Activated naive CD4-positive, alpha-beta T cell treated with anti-CD3 and anti-CD28 coated beads, Interleukin-2, amount 10 ng/mL, durations not matched to agents 7 days and 5 days (primary cell): ENCODE measurements at regions of chr16 and their contacts with region 1.

Region 1: DNA sequence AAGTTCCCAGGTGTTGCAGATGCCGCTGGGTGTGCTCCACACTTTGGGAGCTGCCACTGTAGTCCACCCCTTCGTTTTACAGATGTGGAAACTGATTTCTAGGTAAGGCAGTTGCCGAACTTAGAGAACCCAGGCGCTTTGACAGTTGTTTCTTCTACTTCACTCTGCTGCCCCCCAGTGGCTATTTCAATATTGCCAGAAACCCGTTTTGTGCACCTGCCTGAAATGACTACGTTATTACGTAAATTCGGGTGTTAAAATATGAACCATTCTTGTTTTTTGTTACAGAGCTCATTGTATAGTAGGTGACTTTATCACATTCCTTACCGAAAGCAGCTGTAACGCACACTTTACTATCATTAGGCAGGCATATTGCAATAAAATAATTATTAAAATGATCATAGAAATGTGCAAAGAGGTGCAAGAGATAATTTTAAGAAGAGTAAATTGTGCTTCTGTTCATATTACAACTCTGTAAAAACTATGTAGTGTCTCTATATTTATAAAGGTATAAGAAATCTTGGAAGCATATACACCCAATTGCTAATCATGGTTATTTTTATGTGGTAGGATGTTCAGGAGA is 44.9 kb downstream of the OTOA start:
- DNase-seq: peak; percentile 89
- H3K4me3 Mint-ChIP-seq: no peak overlapping the region
- H3K27ac Mint-ChIP-seq: no peak overlapping the region
- H3K4me1 Mint-ChIP-seq: peaks cover 5% of the 10 kb centered on the region
- H3K27me3 Mint-ChIP-seq: peaks cover 24% of the 10 kb centered on the region

Region 2: DNA sequence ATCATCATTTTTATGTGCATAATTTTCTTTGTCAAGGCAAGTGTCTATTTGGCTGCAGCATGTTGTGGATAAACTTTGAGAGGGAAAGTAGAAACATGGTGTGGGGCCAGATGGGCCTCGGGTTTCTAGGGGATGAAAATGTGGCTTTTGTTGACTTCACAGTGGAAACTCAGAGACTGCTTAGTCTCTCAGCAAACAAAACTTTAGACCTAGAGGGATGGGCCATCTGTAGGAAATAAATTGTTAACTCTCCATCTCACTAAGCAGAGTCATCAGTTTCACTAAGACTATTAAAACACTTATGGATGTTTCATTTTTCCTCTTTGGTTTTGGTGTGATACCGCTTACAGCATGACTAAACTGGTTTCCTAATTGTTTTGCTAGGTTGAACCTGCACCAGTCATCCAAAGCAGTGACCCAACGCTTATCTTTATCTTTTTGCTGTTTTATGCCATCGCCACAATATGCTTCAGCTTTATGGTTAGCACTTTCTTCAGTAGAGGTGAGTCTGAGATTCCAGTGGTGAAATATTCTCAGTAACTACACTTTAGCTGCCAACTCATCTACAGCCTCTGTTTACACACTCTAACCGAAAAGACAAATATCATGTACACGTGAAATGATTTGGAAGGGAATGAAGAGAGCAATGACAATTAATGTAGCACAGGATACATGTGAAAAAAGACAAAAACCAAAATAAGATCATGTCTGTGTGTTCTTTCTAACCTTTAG is 369.9 kb before region 1 on chr16:
- CTCF ChIA-PET with region 1: no interaction called
- DNase-seq: no peak
- H3K4me3 Mint-ChIP-seq: no peak overlapping the region
- H3K27ac Mint-ChIP-seq: no peak overlapping the region
- H3K4me1 Mint-ChIP-seq: no peaks in the 10 kb centered on the region
- H3K27me3 Mint-ChIP-seq: peaks cover 11% of the 10 kb centered on the region

Region 3: GRCh38 chr16:21646721-21647561 is 61.7 kb before region 1 on chr16:
- CTCF ChIA-PET with region 1: interaction called, 10 read pairs
- DNase-seq: peak; percentile 88
- H3K4me3 Mint-ChIP-seq: peak overlapping the region; percentile 73
- H3K27ac Mint-ChIP-seq: peak overlapping the region; percentile 95
- H3K4me1 Mint-ChIP-seq: peaks cover 60% of the 10 kb centered on the region
- H3K27me3 Mint-ChIP-seq: no peaks in the 10 kb centered on the region

Region 4: GRCh38 chr16:22161999-22162655 is 453.5 kb after region 1 on chr16 and contains the start of gene SDR42E2:
- CTCF ChIA-PET with region 1: no interaction called
- DNase-seq: peak; percentile 56
- H3K4me3 Mint-ChIP-seq: peak within 1 kb of the TSS; percentile 6
- H3K27ac Mint-ChIP-seq: no peak within 1 kb of the TSS
- H3K4me1 Mint-ChIP-seq: peaks cover 4% of the 10 kb centered on the region
- H3K27me3 Mint-ChIP-seq: peaks cover 57% of the 10 kb centered on the region